MCF 10A (cell line): ENCODE measurements at regions of chr6 and their contacts with region 1.

Region 1: GRCh38 chr6:25263657-25264056 is 15.5 kb upstream of the CARMIL1 start:
- DNase-seq: peak; percentile 30
- H3K4me3 Mint-ChIP-seq: no peak overlapping the region
- H3K27ac Mint-ChIP-seq: no peak overlapping the region
- H3K4me1 Mint-ChIP-seq: peaks cover 8% of the 10 kb centered on the region
- H3K27me3 Mint-ChIP-seq: no peaks in the 10 kb centered on the region
- CTCF ChIP-seq: no peak

Region 2: GRCh38 chr6:25237579-25237978 is 26.1 kb before region 1 on chr6:
- CTCF ChIA-PET with region 1: no interaction called
- POLR2A ChIA-PET with region 1: no interaction called
- intact Hi-C with region 1: no loop called
- DNase-seq: no peak
- H3K4me3 Mint-ChIP-seq: no peak overlapping the region
- H3K27ac Mint-ChIP-seq: no peak overlapping the region
- H3K4me1 Mint-ChIP-seq: no peaks in the 10 kb centered on the region
- H3K27me3 Mint-ChIP-seq: no peaks in the 10 kb centered on the region
- CTCF ChIP-seq: no peak

Region 3: DNA sequence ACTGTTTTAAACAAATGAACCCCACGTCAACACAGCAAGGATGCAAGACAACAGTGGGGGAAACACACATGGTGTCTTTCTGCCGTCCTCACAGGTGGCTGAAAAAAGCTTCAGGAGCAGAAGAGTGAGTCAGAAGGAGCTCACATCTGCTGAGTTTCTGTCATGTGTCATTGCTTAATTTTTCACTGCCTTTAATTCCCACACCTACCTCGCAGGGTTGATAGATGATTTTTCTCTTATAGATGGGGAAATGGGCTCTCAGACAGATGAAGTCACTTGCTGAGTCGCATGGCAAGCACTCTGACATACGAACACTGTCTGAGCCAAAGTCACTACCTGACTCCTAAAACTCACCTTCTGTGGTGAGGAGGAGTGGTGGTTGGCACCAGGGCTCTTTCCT is 12.8 kb before region 1 on chr6:
- CTCF ChIA-PET with region 1: interaction called, 14 read pairs
- POLR2A ChIA-PET with region 1: interaction called, 5 read pairs
- intact Hi-C with region 1: no loop called
- DNase-seq: peak; percentile 81
- H3K4me3 Mint-ChIP-seq: no peak overlapping the region
- H3K27ac Mint-ChIP-seq: no peak overlapping the region
- H3K4me1 Mint-ChIP-seq: peaks cover 25% of the 10 kb centered on the region
- H3K27me3 Mint-ChIP-seq: no peaks in the 10 kb centered on the region
- CTCF ChIP-seq: no peak

Region 4: DNA sequence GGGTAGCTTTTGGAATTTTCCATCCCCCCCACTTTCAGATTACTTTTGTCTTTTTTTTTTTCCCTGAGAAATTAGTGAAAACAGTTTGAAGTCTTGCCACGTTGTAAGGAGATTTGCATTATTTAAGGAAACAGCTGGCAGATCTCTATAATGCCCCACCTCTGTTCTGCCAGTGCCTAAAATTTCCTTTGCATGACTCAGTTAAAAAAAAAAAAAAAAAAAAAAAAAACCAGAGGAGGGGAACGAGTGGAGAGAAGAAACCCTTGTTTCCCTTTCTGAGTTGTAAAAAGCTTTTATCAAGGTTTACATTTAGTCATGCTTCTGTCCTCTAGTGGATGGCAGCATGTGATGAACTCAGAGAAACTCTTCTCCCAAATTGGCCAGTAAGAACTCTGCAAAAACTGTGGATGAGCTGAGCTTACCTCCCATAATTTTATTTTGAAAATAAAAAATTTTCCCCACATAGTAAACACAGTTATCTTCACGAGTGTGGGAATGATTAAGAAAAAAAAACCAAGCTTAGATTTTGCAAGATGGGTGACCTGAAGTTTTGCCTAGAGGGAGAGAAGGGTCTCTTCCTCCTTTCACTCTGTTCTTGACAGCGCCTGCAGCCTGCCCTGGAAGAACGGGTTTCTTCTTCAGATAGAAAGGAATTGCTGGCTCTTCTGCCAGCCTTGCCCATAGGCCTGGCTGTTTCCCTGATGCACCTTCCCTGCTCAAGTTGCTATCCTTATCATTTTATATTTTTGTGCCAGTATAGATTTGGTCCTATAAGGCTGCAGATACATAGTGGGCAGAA is 49.2 kb after region 1 on chr6:
- CTCF ChIA-PET with region 1: interaction called, 10 read pairs
- POLR2A ChIA-PET with region 1: interaction called, 4 read pairs
- intact Hi-C with region 1: no loop called
- DNase-seq: peak; percentile 70
- H3K4me3 Mint-ChIP-seq: peak overlapping the region; percentile 69
- H3K27ac Mint-ChIP-seq: peak overlapping the region; percentile 90
- H3K4me1 Mint-ChIP-seq: peaks cover 32% of the 10 kb centered on the region
- H3K27me3 Mint-ChIP-seq: no peaks in the 10 kb centered on the region
- CTCF ChIP-seq: no peak

Region 5: DNA sequence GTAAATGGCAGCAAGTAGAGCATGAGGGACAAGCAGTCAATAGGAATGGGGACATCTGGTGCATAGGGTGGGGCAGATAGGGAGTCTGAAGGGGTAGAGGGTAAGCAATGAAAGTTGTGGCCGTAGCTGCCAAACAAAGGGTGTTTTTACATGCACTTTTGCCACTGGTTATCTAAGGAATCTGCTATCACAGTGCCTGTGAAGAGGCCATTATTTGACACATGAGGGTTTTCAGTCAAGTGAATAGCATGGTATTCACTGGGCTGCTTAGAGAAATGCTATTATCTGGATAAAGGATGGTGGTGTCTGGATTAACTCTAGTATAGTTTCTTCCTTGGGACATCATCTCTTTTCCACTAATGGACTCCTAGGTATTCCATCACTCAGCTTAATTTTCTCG is 133.7 kb after region 1 on chr6:
- CTCF ChIA-PET with region 1: no interaction called
- POLR2A ChIA-PET with region 1: no interaction called
- intact Hi-C with region 1: no loop called
- DNase-seq: no peak
- H3K4me3 Mint-ChIP-seq: no peak overlapping the region
- H3K27ac Mint-ChIP-seq: no peak overlapping the region
- H3K4me1 Mint-ChIP-seq: peaks cover 3% of the 10 kb centered on the region
- H3K27me3 Mint-ChIP-seq: no peaks in the 10 kb centered on the region
- CTCF ChIP-seq: no peak

Region 6: GRCh38 chr6:25490018-25490801 is 226.6 kb after region 1 on chr6:
- CTCF ChIA-PET with region 1: interaction called, 107 read pairs
- POLR2A ChIA-PET with region 1: interaction called, 16 read pairs
- intact Hi-C with region 1: loop called (anchors 1 kb)
- DNase-seq: peak; percentile 88
- H3K4me3 Mint-ChIP-seq: no peak overlapping the region
- H3K27ac Mint-ChIP-seq: peak overlapping the region; percentile 86
- H3K4me1 Mint-ChIP-seq: peaks cover 8% of the 10 kb centered on the region
- H3K27me3 Mint-ChIP-seq: no peaks in the 10 kb centered on the region
- CTCF ChIP-seq: peak; percentile 70

Region 7: GRCh38 chr6:25556516-25556915 is 292.9 kb after region 1 on chr6:
- CTCF ChIA-PET with region 1: interaction called, 35 read pairs
- POLR2A ChIA-PET with region 1: interaction called, 4 read pairs
- intact Hi-C with region 1: loop called (anchors 1 kb)
- DNase-seq: peak; percentile 83
- H3K4me3 Mint-ChIP-seq: no peak overlapping the region
- H3K27ac Mint-ChIP-seq: no peak overlapping the region
- H3K4me1 Mint-ChIP-seq: peaks cover 5% of the 10 kb centered on the region
- H3K27me3 Mint-ChIP-seq: no peaks in the 10 kb centered on the region
- CTCF ChIP-seq: peak; percentile 69

Region 8: DNA sequence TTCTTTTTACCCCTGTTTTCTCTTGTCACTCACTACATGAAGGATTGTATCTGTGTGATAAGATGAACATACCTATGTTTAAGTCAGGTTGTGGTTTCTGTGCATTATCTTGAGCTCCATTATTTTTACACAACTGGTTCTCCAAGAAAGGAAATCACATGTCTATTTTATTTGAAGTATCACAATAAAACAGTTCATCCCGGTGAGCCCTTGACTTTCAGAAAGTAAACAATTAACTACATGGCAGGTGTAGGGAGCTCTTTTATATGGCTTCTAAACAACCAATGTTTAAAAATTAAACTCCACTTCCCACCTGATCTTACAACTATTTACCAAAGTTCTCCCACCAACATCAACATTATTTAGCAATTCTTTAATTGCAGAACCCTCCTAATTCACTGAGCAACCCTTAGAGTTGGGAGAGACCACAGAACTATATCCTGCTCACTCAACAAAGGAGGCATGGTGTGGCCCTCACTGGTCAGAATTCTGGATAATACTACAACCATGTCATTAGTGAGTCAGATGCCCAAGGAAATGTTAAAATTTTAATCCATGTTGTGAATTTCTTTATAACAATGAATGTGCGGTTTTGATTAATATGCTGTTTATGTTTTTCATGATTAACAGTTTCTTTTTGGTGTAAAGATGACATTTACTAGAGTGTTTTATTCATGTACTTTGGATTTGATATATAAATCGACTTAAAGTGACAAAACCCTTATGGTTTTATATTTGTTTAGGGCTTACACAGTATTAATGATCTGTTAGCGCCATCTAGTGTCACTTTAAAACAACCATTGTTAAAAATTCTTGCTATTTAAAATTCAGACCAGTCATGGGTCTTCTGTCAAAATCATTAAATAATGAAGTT is 338.4 kb after region 1 on chr6:
- CTCF ChIA-PET with region 1: interaction called, 4 read pairs
- POLR2A ChIA-PET with region 1: no interaction called
- intact Hi-C with region 1: loop called (anchors 1 kb)
- DNase-seq: peak; percentile 58
- H3K4me3 Mint-ChIP-seq: no peak overlapping the region
- H3K27ac Mint-ChIP-seq: no peak overlapping the region
- H3K4me1 Mint-ChIP-seq: no peaks in the 10 kb centered on the region
- H3K27me3 Mint-ChIP-seq: no peaks in the 10 kb centered on the region
- CTCF ChIP-seq: peak; percentile 47

Region 9: DNA sequence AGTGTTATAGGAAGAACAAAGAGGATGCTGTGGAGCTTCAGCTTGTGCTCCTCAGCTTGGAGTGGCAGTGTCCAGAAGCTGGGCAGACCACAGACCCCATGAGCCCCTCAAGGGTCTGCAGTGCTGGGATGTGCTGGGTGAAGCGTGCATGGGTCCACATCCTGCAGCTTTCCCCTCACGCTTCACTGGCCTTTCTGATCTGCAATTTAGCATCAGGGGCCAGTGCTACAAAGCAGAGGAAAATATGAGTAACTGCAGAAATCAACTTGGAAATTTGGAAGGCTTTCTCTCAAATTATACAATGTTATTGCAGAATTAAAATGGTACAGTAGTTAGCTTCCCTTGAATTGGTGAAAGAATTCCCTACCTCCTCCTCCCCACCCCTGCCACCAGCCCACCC is 501.0 kb after region 1 on chr6:
- CTCF ChIA-PET with region 1: no interaction called
- POLR2A ChIA-PET with region 1: no interaction called
- intact Hi-C with region 1: no loop called
- DNase-seq: no peak
- H3K4me3 Mint-ChIP-seq: no peak overlapping the region
- H3K27ac Mint-ChIP-seq: no peak overlapping the region
- H3K4me1 Mint-ChIP-seq: no peaks in the 10 kb centered on the region
- H3K27me3 Mint-ChIP-seq: peaks cover 44% of the 10 kb centered on the region
- CTCF ChIP-seq: no peak

Region 10: GRCh38 chr6:25889877-25890853 is 626.5 kb after region 1 on chr6:
- CTCF ChIA-PET with region 1: no interaction called
- POLR2A ChIA-PET with region 1: no interaction called
- intact Hi-C with region 1: loop called (anchors 5 kb)
- DNase-seq: peak; percentile 75
- H3K4me3 Mint-ChIP-seq: no peak overlapping the region
- H3K27ac Mint-ChIP-seq: no peak overlapping the region
- H3K4me1 Mint-ChIP-seq: no peaks in the 10 kb centered on the region
- H3K27me3 Mint-ChIP-seq: no peaks in the 10 kb centered on the region
- CTCF ChIP-seq: peak; percentile 60